Ovary (tissue), 10 donors: ENCODE measurements at regions of chr2 and their contacts with region 1.

Region 1: DNA sequence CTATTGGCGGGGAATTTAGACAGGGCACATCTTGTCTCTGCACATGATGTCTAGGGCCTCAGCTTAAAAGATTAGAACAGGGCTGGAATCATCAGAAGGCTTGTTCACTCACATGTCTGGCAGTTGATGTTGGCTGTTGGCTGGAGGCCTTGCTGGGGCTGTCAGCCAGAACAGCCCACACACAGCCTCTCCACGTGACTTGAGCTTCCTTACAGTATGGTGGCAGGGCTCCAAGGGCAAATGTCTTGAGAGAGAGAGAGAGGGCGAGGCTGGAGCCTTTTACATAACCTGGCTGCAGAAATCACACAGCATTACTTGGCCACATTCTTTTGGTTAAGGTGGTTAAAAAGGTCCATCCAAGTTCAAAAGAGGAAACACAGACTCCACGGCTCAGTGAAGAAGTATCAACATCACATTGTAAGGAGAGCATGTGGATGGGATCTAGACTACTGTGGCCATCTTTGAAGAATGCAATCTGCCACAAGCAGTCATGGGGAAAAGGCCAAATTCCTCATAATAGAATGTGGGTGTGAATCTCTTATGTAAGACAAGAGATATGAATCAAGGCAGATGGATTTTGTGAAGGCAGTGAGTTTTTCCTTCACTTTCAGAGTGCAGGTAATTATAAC is 30.4 kb downstream of the SRSF7 start:
- DNase-seq: peak; percentile 81 to 93 (median 89)
- H3K4me3 ChIP-seq: no peak overlapping the region
- H3K27ac ChIP-seq: no peak overlapping the region
- H3K4me1 ChIP-seq: peaks cover 4% of the 10 kb centered on the region
- H3K27me3 ChIP-seq: no peaks in the 10 kb centered on the region
- CTCF ChIP-seq: no peak
- EP300 ChIP-seq: no peak
- POLR2A ChIP-seq: no peak

Region 2: GRCh38 chr2:38315707-38316333 is 404.9 kb before region 1 on chr2:
- intact Hi-C with region 1: no loop called
- DNase-seq: no peak
- H3K4me3 ChIP-seq: no peak overlapping the region
- H3K27ac ChIP-seq: no peak overlapping the region
- H3K4me1 ChIP-seq: no peaks in the 10 kb centered on the region
- H3K27me3 ChIP-seq: no peaks in the 10 kb centered on the region
- CTCF ChIP-seq: peak; percentile 58 to 66 (median 60)
- EP300 ChIP-seq: no peak
- POLR2A ChIP-seq: no peak

Region 3: GRCh38 chr2:38485734-38486133 is 235.0 kb before region 1 on chr2:
- intact Hi-C with region 1: no loop called
- DNase-seq: no peak
- H3K4me3 ChIP-seq: no peak overlapping the region
- H3K27ac ChIP-seq: no peak overlapping the region
- H3K4me1 ChIP-seq: peaks cover 4% of the 10 kb centered on the region
- H3K27me3 ChIP-seq: no peaks in the 10 kb centered on the region
- CTCF ChIP-seq: no peak
- EP300 ChIP-seq: no peak
- POLR2A ChIP-seq: no peak

Region 4: DNA sequence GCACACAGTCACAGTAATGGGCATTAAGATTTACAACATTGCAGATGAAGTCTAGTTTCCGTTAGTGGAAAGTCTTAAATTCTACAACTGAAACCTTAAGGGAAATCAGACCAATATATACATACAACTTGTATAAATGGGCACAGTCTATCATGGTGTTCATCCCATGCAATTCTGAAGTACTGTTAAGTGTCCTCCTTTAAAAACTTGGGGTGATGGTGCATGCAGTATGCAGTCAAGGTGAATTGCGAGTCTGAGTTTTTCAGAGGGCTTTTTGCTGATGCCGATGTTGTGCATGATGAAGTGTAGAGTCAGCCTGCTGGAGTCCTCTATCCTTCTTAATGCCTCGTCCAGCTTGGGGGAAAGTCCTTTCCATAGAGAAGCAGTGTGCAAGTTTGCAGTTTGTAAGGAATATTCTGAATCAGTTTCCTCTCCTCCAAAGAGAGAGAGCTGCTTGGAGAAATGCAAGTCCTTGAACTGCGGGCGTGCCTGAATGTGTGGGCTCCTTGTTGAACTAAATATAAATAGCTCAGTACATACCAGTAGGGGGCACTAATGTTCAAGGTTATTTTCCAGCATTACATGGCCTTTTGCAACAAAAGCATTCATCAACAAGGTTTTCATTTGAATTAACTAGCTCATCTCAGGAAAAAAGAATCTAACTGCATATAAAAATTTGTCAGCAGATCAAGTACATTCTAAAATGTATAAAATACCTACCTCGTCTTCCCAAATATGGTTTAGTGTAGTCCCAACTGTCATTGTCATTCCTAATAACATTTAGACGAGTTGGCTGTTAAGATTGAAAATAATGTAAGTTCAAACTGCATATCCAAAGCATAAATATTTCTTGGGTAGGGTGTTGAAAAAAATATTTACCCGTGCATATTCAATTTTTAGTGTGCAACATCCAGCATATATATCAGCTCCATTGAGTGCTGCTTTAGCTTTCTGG is 139.3 kb before region 1 on chr2:
- intact Hi-C with region 1: loop called in 1 of 4 experiments (anchors 10 kb)
- DNase-seq: peak; percentile 57 to 76 (median 69)
- H3K4me3 ChIP-seq: no peak overlapping the region
- H3K27ac ChIP-seq: no peak overlapping the region
- H3K4me1 ChIP-seq: peaks cover 3% of the 10 kb centered on the region
- H3K27me3 ChIP-seq: no peaks in the 10 kb centered on the region
- CTCF ChIP-seq: peak; percentile 59 to 67 (median 62)
- EP300 ChIP-seq: no peak
- POLR2A ChIP-seq: no peak

Region 5: GRCh38 chr2:38602732-38603401 is 117.9 kb before region 1 on chr2 and contains the start of gene HNRNPLL:
- intact Hi-C with region 1: loop called in 2 of 4 experiments (anchors 5 to 10 kb)
- DNase-seq: peak; percentile 98 to 99 (median 99)
- H3K4me3 ChIP-seq: peak within 1 kb of the TSS; percentile 79
- H3K27ac ChIP-seq: peak within 1 kb of the TSS; percentile 95 to 98
- H3K4me1 ChIP-seq: peaks cover 8% of the 10 kb centered on the region
- H3K27me3 ChIP-seq: no peaks in the 10 kb centered on the region
- CTCF ChIP-seq: no peak
- EP300 ChIP-seq: peak; percentile 22
- POLR2A ChIP-seq: peak; percentile 97
- total RNA-seq, gene HNRNPLL: 46.9 to 59.2 (median 48.9) TPM